ENCODE measurements at regions of chr17 and their contacts with region 1.

Region 1: GRCh38 chr17:34998205-34998604 is 17.9 kb downstream of the LIG3 start:
- DNase-seq: peak; percentile 78
- H3K4me3 ChIP-seq: no peak overlapping the region
- H3K27ac ChIP-seq: no peak overlapping the region
- H3K4me1 ChIP-seq: peaks cover 2% of the 10 kb centered on the region
- H3K27me3 ChIP-seq: no peaks in the 10 kb centered on the region
- CTCF ChIP-seq: peak; percentile 92 to 95
- POLR2A ChIP-seq: no peak

Region 2: DNA sequence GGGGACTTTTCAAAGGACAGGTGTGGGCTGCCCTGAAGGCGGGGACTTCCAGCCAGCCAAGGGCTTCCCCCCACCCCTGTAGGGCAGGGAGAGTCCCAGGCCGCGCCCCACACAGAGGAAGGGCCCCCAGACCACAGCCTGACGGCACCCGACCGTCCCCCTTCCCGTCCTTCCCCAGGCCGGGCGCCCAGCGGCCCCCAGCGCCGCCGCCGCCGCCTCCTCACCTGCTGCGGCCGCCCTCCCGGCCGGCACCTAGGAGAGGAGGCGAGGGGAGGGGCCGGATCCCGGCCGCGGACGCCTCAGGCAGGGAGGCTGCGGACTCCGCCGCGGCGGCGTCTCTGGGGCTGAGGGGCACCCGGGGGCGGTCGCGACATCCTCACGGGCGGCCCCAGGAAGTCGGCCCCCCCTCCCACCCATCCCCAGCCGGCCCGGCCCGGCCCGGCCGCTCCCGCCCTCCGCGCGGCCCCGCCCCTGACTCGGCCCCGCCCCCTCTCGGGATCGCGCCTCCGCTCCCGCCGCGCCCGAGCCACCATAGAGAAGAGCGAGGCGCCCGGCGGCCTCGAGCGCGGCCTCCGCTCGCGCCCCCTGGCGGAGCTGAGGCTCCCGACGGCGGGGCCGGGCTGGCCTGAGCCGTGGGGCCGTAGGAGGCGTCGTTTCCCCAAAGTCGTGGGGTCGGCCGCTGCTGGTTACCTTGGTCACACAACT is 90.8 kb after region 1 on chr17:
- CTCF ChIA-PET with region 1: interaction called, 23 read pairs
- POLR2A ChIA-PET with region 1: interaction called, 3 read pairs
- dilution Hi-C with region 1: no loop called
- intact Hi-C with region 1: loop called (anchors 1 kb)
- DNase-seq: peak; percentile 73
- H3K4me3 ChIP-seq: peak overlapping the region; percentile 65 to 81 (median 71)
- H3K27ac ChIP-seq: peak overlapping the region; percentile 72
- H3K4me1 ChIP-seq: peaks cover 22% of the 10 kb centered on the region
- H3K27me3 ChIP-seq: no peaks in the 10 kb centered on the region
- CTCF ChIP-seq: peak; percentile 76 to 77
- POLR2A ChIP-seq: peak; percentile 45

Region 3: DNA sequence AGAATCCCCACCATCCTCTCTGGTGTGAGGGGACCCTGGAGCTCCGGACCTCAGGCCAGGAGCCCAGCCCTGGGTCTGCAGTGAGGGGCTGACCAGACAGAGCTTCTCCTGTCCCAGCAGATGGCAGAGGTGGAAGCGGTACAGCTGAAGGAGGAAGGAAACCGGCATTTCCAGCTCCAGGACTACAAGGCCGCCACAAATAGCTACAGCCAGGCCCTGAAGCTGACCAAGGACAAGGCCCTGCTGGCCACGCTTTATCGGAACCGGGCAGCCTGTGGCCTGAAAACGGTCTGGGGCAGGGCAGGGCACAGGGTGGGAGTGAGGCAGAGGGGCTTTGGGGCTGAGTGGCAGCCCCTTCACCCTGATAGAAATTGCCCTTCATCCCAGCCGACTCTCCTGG is 149.9 kb after region 1 on chr17:
- CTCF ChIA-PET with region 1: no interaction called
- POLR2A ChIA-PET with region 1: no interaction called
- dilution Hi-C with region 1: no loop called
- intact Hi-C with region 1: no loop called
- DNase-seq: no peak
- H3K4me3 ChIP-seq: no peak overlapping the region
- H3K27ac ChIP-seq: no peak overlapping the region
- H3K4me1 ChIP-seq: no peaks in the 10 kb centered on the region
- H3K27me3 ChIP-seq: peaks cover 4 to 11% of the 10 kb centered on the region in 2 experiments
- CTCF ChIP-seq: no peak
- POLR2A ChIP-seq: no peak

Measured in endothelial cell of umbilical vein (primary cell).